ENCODE measurements at regions of chr7 and their contacts with region 1.

Region 1: DNA sequence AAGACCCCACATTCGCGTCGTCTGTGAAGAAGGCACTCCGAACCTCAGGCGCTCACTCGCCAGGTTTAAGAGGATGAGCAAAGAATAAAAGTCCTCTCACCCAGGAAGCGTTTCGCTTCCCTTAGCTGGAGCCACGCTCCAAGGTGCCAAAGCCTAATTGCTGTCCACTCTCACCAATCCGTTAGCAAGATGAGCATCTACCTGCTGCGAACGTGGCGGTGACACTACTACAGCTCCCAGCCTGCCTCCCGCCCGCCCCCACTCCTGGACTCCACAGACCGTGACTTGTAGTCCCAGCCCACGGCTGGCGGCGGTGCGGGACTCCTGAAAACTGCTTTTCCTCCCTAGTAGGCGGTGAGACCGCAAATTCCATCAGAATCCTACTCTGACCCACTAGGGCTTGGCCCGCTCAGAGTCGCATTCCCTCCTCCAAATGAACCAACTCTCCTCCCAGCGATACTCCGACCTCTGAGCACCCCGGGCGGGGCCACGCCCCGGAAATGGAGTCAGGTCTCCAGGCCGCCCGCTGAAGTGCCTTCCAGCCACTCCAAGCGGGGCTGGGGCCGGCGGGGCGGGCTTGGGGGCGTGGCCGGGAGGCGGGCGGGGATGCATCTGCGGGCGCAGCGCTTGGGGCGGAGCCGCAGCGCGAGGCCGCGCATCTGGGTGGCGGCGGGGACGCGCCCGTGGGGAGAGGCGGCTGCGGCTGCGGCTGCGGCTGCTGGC is 521 bp upstream of the PTPN12 start:
- H3K4me3 Mint-ChIP-seq: peak overlapping the region; percentile 92
- H3K27ac Mint-ChIP-seq: peak overlapping the region; percentile 91
- H3K4me1 Mint-ChIP-seq: peaks cover 46% of the 10 kb centered on the region
- H3K27me3 Mint-ChIP-seq: no peaks in the 10 kb centered on the region

Region 2: DNA sequence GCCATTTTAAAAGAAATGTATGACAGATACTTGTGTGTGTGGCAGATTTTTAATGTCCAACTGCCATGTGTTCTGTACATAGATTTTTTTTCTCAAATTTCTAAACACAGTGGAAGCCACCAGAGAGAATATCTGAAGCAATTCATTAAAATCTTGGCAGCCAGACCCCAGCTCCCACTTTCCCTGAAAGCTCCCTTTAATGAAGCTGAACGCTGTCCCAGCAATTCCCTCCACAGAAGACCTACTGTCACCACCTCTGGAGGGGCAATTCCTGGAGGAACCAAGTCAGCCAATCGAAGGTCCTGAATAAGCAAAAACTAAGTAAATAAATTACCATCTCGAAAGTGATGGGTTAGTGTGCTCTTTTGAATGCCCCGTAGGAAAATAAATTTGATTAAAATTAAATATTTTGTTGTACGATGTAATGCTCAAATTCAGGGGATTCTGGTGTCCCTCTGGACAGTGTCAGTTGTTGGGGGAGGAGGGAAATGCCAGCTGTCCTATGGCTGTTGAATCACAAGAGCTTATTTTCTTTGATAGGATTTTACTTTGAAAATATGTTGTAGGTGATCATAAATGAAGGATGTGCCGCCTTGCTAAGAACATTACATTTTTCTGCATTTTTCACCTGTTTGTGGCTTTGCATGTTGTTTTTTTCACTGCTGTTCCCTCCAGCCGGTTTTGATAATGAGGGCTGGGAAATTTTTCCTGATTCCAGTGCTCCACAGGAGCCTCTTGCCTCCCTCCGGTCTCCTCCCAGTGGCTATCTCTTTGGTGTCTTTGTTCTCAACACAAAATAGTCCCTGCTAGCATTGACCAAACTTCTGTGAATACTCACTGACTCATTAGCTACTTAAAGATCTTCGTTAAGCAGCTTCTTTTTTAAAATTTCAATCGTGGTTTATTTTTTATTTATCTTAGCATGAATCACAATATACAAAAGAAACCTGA is 111.2 kb before region 1 on chr7:
- intact Hi-C with region 1: loop called (anchors 5 kb)
- H3K4me3 Mint-ChIP-seq: peak overlapping the region; percentile 51
- H3K27ac Mint-ChIP-seq: peak overlapping the region; percentile 69
- H3K4me1 Mint-ChIP-seq: peaks cover 69% of the 10 kb centered on the region
- H3K27me3 Mint-ChIP-seq: no peaks in the 10 kb centered on the region

Region 3: GRCh38 chr7:77467408-77467807 is 69.2 kb before region 1 on chr7:
- intact Hi-C with region 1: loop called (anchors 5 kb)
- H3K4me3 Mint-ChIP-seq: no peak overlapping the region
- H3K27ac Mint-ChIP-seq: no peak overlapping the region
- H3K4me1 Mint-ChIP-seq: peaks cover 35% of the 10 kb centered on the region
- H3K27me3 Mint-ChIP-seq: no peaks in the 10 kb centered on the region

Region 4: GRCh38 chr7:77570330-77571011 is 33.9 kb after region 1 on chr7:
- intact Hi-C with region 1: loop called (anchors 2 kb)
- H3K4me3 Mint-ChIP-seq: peak overlapping the region; percentile 6
- H3K27ac Mint-ChIP-seq: peak overlapping the region; percentile 79
- H3K4me1 Mint-ChIP-seq: peaks cover 29% of the 10 kb centered on the region
- H3K27me3 Mint-ChIP-seq: no peaks in the 10 kb centered on the region

Region 5: DNA sequence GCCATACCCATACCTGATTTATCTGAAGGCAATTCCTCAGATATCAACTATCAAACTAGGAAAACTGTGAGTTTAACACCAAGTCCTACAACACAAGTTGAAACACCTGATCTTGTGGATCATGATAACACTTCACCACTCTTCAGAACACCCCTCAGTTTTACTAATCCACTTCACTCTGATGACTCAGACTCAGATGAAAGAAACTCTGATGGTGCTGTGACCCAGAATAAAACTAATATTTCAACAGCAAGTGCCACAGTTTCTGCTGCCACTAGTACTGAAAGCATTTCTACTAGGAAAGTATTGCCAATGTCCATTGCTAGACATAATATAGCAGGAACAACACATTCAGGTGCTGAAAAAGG is 90.7 kb after region 1 on chr7:
- intact Hi-C with region 1: no loop called
- H3K4me3 Mint-ChIP-seq: no peak overlapping the region
- H3K27ac Mint-ChIP-seq: no peak overlapping the region
- H3K4me1 Mint-ChIP-seq: no peaks in the 10 kb centered on the region
- H3K27me3 Mint-ChIP-seq: no peaks in the 10 kb centered on the region